Activated CD8-positive, alpha-beta T cell treated with anti-CD3 and anti-CD28 coated beads, Interleukin-2, amount 10 ng/mL, durations not matched to agents 7 days and 5 days (primary cell): ENCODE measurements at regions of chr1 and their contacts with region 1.

Region 1: DNA sequence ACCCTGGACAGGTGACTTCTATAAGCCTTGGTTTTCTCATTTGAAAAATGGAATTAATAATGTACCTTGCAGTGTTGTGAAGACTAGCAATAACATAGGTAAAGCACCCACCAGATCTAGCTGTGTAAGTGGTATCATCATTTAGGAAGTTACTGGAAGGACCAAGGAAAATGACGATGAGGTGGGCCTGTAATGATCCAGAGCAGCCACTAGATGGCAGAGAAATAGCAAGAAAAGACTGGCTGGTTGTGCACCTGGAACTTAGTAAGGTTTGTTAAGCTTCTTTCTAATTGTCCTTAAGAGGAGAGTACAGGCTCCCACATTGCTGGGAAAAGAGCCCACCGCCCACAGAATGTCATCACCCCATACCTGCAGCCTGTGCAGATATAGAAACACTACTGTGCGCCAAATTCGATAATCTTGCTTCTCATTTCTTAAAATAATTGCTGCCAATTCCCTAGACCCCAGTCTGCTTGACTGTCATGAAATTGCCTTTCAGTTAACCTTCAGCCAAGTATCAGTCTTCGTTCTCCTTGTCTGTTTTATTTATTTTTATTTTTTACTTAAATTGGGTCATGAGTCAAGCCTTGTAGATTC is 37.2 kb downstream of the WNT4 start:
- DNase-seq: peak; percentile 52
- ATAC-seq: peak; percentile 31
- H3K4me3 Mint-ChIP-seq: peak overlapping the region; percentile 44
- H3K27ac Mint-ChIP-seq: peak overlapping the region; percentile 92
- H3K4me1 Mint-ChIP-seq: peaks cover 56% of the 10 kb centered on the region
- H3K27me3 Mint-ChIP-seq: no peaks in the 10 kb centered on the region

Region 2: DNA sequence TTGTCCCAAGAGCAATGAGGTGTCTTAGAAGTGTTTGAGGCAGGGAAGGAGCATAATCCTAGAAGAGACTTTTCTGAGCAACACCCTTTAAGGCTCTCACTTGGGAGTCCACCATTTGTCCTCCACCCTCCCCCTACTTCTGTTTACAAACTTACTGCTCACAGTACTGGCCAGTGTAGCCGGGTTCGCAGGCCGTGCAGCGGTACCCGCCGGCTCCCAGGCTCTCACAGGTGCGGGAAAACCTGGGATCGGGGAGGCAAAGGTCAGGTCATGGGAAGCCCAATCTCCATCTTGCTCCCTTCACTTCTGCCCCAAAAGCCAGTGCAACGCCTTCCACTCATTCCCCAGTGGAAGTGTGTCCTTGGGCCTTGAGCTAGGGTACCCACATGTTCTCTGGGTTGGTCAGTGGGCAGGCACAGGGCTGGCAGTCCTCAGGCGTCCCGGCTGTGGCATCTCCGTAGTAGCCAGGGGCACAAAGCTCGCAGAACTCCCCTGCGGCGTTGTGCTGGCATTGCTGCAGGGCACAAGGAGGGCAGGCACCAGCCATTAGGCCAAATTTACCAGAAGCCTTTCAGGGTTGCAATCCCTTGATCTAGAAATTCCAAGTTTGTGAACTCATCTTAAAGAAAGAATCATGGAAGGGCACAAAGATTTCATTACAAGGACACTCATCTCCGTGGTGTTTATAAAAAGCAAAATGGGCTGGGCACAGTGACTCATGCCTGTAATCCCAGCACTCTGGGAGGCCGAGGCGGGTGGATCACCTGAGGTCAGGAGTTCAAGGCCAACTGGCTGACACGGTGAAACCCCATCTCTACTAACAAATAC is 243.9 kb before region 1 on chr1:
- CTCF ChIA-PET with region 1: no interaction called
- POLR2A ChIA-PET with region 1: no interaction called
- DNase-seq: no peak
- ATAC-seq: no peak
- H3K4me3 Mint-ChIP-seq: no peak overlapping the region
- H3K27ac Mint-ChIP-seq: no peak overlapping the region
- H3K4me1 Mint-ChIP-seq: peaks cover 20% of the 10 kb centered on the region
- H3K27me3 Mint-ChIP-seq: no peaks in the 10 kb centered on the region

Region 3: GRCh38 chr1:22080191-22080590 is 25.5 kb before region 1 on chr1:
- CTCF ChIA-PET with region 1: interaction called, 12 read pairs
- POLR2A ChIA-PET with region 1: no interaction called
- DNase-seq: no peak
- ATAC-seq: no peak
- H3K4me3 Mint-ChIP-seq: no peak overlapping the region
- H3K27ac Mint-ChIP-seq: no peak overlapping the region
- H3K4me1 Mint-ChIP-seq: peaks cover 73% of the 10 kb centered on the region
- H3K27me3 Mint-ChIP-seq: no peaks in the 10 kb centered on the region

Region 4: DNA sequence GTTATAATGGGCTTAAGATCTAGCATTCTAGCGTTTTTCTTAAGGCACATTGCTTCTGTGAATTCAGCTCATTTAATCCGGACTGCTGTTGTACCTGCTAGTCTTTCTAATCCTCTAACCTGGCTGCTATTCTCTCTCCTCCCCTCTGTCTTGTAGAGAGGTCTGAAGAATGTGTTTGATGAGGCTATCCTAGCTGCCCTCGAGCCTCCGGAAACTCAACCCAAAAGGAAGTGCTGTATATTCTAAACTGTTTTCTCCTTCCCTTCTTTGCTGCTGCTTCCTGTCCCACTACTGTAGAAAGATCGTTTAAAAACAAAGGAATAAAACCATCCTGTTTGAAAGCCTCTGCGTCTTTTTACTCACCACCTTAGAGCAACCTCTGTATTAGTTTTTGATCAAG is 15.9 kb before region 1 on chr1:
- CTCF ChIA-PET with region 1: interaction called, 28 read pairs
- POLR2A ChIA-PET with region 1: no interaction called
- DNase-seq: peak; percentile 52
- ATAC-seq: peak; percentile 75
- H3K4me3 Mint-ChIP-seq: peak overlapping the region; percentile 62
- H3K27ac Mint-ChIP-seq: peak overlapping the region; percentile 87
- H3K4me1 Mint-ChIP-seq: peaks cover 88% of the 10 kb centered on the region
- H3K27me3 Mint-ChIP-seq: no peaks in the 10 kb centered on the region